ENCODE measurements at regions of chr2 and their contacts with region 1.

Region 1: GRCh38 chr2:218033590-218034496 is 31.0 kb upstream of the TNS1 start:
- DNase-seq: peak in 1 of 2 experiments; percentile 75
- H3K4me3 ChIP-seq: peak overlapping the region; percentile 25 to 63 (median 44); a peak in 7 of 8 replicates
- H3K27ac ChIP-seq: no peak overlapping the region
- H3K4me1 ChIP-seq: peaks cover 0 to 13% (median 5%) of the 10 kb centered on the region in 4 experiments; a peak in 5 of 7 replicates
- H3K27me3 ChIP-seq: peaks cover 6 to 25% (median 20%) of the 10 kb centered on the region in 4 experiments
- CTCF ChIP-seq: no peak
- EP300 ChIP-seq: no peak
- POLR2A ChIP-seq: no peak
- RAD21 ChIP-seq: no peak

Region 2: DNA sequence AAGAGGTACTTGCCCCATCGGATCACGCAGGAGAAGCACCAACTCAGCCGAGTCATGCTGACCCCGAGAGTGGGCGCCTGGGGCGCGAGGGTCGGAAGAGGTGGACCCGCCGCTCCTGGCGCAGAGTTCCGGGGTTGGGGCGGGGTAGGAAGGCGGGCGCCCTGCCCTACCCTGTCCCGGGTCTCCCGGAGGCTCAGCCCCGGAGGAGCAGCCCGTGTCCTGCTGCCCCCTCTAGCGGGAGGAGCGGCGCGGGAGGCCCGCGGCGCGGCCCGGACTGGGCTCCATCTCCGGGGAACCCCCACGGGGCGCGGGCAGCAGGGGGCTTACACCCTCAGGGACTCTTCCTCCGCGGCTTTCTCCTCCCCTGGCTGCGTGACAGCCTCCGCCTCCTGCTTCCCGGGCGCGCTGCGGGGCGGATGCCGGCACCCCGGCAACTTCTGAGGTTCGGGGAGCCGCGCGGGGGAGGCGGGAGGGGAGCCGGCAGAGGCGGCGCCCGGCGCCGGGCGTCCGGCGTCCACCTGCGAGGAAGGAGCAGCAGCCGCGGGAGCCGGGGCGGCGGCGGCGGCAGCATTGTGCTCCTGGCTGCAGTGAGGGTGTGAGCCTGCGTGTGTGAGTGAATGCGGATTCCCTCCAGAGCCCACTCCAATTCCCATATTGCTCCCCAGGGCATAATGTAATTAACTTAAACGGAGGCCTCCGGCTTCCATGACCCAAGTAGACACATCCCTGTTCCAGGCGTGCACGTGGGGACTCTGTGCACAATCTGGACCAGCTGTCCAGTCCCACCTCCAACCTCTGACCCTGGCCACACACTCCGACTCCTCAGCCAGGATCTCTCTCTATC is 23.5 kb before region 1 on chr2:
- CTCF ChIA-PET with region 1: interaction called, 16 read pairs
- POLR2A ChIA-PET with region 1: interaction called, 4 read pairs
- DNase-seq: peak in 1 of 2 experiments; percentile 76
- H3K4me3 ChIP-seq: peak overlapping the region; percentile 43 to 73 (median 56)
- H3K27ac ChIP-seq: no peak overlapping the region
- H3K4me1 ChIP-seq: peaks cover 0 to 12% (median 8%) of the 10 kb centered on the region in 4 experiments; a peak in 5 of 7 replicates
- H3K27me3 ChIP-seq: peaks cover 12 to 40% (median 32%) of the 10 kb centered on the region in 4 experiments
- CTCF ChIP-seq: peak in 2 of 3 experiments; percentile 18 to 29; a peak in 3 of 4 replicates
- EP300 ChIP-seq: no peak
- POLR2A ChIP-seq: no peak
- RAD21 ChIP-seq: peak in 1 of 2 experiments; percentile 42; a peak in 1 of 4 replicates

Region 3: DNA sequence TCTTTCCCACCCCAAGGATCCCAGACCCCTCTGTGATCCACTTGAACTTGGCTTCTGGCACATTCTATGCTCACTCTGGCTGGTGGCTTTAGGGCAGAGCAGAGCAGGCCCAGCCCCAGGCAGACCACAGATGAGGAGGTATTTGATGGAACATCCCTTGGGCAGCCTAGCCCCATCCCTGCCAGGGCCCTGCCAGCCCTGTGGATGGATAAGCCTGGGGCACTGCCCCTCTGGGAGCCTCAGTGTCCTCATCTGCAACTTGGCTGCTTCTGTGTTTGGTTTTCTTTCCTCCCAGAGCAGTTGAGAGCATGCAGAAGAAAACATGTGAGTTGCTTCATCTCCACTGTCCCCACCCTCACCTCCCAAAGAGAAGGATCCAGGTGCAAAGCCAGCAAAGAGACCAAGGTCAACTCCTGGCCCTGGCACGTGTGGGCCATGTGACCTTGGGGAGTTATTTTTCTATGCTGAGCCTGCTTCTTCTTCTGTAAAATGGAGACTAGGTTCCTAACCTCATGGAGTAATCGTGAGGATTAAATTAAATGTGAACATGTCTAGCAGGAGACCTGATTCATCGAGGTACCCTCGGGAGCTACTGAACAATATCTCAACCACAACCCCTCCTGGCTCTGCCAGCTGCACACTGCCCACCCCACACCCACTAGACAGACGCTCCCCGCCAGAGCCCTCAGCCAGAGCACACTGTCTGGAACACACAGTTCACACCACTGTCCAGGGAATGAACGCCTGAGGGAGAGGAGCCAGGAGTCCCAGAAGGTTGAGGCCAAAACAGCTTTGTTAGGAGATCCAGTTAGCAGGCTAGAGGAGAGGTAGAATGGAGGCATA is 16.4 kb before region 1 on chr2:
- CTCF ChIA-PET with region 1: interaction called, 16 read pairs
- POLR2A ChIA-PET with region 1: interaction called, 4 read pairs
- DNase-seq: no peak
- H3K4me3 ChIP-seq: no peak overlapping the region
- H3K27ac ChIP-seq: no peak overlapping the region
- H3K4me1 ChIP-seq: peaks cover 0 to 15% (median 7%) of the 10 kb centered on the region in 4 experiments; a peak in 6 of 7 replicates
- H3K27me3 ChIP-seq: no peaks in the 10 kb centered on the region
- CTCF ChIP-seq: no peak
- EP300 ChIP-seq: no peak
- POLR2A ChIP-seq: no peak
- RAD21 ChIP-seq: no peak

Region 4: DNA sequence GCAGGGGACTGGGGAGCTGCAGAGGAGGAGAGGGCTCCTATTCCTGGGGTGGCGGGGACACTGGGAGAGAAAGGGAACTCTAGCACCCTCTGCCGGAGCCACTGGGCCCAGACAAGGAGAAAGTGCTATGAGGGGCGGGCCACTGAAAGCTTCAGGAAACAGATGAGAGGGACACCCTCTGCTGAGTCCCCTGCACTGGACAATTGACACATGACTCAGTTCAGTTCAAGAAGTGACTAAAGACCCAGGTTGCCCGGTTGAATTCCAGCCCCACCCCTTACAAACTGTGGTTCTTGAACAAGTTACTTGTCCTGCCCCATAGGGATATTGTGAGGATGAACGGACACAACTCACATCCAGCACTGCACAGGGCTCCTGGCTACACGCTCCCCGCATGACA is 40.2 kb after region 1 on chr2:
- CTCF ChIA-PET with region 1: interaction called, 17 read pairs
- POLR2A ChIA-PET with region 1: interaction called, 3 read pairs
- DNase-seq: peak; percentile 27 to 86
- H3K4me3 ChIP-seq: no peak overlapping the region
- H3K27ac ChIP-seq: no peak overlapping the region
- H3K4me1 ChIP-seq: peaks cover 0 to 7% (median under 1%) of the 10 kb centered on the region in 4 experiments; a peak in 3 of 7 replicates
- H3K27me3 ChIP-seq: no peaks in the 10 kb centered on the region; a peak in 1 of 7 replicates
- CTCF ChIP-seq: peak; percentile 67 to 79 (median 73)
- EP300 ChIP-seq: no peak
- POLR2A ChIP-seq: no peak
- RAD21 ChIP-seq: peak; percentile 46 to 62